ENCODE measurements at regions of chr19 and their contacts with region 1.

Region 1: DNA sequence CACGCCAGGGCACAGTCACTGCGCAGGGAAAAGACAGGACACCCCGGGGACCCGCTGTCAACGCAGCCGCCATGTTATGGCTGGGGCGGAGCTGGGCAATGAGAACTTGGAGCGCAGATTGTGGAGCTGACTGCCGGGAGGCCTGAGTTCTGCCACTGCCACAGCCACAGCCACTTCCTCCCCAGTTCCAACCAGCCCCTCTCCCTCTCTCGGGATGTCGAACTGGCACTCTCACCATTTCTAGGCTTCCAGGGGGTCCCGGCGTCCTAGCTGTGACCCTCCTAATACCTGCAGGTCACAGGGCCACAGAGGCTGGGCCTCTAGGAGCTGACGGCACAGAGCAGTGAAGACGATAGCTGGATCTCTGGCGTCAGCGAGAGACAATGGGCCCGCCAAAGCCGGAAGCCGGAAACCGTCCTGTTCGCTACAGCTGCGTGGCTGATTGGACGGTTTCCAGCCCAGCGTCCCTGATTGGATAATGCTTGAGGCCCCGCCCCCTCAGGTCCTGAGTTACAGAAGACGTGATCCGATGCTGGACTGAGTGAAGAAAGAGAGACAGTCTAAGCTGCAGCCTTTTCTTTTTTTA is at the start of gene ZNF506:
- DNase-seq: peak; percentile 91
- ATAC-seq: peak; percentile 95
- H3K4me3 Mint-ChIP-seq: peak within 1 kb of the TSS; percentile 98
- H3K27ac Mint-ChIP-seq: peak within 1 kb of the TSS; percentile 99
- H3K4me1 Mint-ChIP-seq: peaks cover 15% of the 10 kb centered on the region
- H3K27me3 Mint-ChIP-seq: no peaks in the 10 kb centered on the region
- total RNA-seq, gene ZNF506: 39.4 to 41.5 TPM

Region 2: DNA sequence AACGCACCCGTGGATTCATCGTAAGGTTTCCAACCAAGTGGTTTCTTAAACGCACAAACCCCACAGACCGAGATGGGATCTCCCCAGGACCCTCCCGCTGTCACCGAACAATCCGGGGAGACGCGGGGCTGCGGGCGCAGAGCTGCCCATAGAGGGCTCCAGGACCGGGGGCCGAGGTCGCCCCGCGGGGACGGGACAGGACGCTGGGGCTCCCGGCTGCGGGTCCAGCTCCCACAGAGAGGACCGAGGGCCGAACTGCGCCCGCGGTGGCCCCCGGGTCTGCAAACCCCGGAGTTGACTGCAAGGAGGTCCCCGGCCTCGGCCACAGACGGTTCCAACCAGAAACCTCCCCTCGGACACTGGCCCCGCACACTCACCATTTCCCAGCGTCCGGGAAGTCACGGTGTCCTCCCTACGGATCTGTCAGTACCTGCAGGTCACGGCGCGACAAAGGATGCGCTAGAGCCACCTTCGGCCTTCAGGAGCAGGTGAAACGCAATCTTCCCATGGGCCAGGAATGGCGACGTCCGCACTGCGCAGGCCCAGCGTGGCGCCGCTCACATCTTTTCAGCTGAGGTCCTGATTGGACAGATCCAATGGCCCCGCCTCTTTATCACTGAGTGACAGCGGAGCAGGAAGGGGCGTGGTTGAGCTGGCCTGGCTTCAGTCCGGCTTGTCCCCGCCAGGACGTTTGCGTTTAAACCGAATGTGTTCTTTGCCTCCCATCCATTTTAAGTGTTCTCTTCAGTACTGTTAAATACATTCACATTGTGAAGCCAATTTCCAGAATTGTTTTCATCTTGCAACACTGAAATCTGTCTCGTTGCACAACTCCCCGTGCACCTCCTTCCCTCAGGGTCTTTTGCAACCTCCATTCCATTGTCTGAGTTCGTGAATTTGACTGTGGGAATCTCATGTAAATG is 88.6 kb before region 1 on chr19 and contains the start of gene ZNF14:
- POLR2A ChIA-PET with region 1: interaction called, 18 read pairs
- DNase-seq: peak; percentile 85
- ATAC-seq: peak; percentile 100
- H3K4me3 Mint-ChIP-seq: peak within 1 kb of the TSS; percentile 99
- H3K27ac Mint-ChIP-seq: peak within 1 kb of the TSS; percentile 97
- H3K4me1 Mint-ChIP-seq: peaks cover 16% of the 10 kb centered on the region
- H3K27me3 Mint-ChIP-seq: no peaks in the 10 kb centered on the region
- total RNA-seq, gene ZNF14: 13.7 to 16.9 TPM

Region 3: GRCh38 chr19:19860756-19861390 is 39.4 kb after region 1 on chr19:
- POLR2A ChIA-PET with region 1: interaction called, 87 read pairs
- DNase-seq: peak; percentile 48
- ATAC-seq: peak; percentile 44
- H3K4me3 Mint-ChIP-seq: peak overlapping the region; percentile 77
- H3K27ac Mint-ChIP-seq: peak overlapping the region; percentile 72
- H3K4me1 Mint-ChIP-seq: peaks cover 8% of the 10 kb centered on the region
- H3K27me3 Mint-ChIP-seq: no peaks in the 10 kb centered on the region

Region 4: DNA sequence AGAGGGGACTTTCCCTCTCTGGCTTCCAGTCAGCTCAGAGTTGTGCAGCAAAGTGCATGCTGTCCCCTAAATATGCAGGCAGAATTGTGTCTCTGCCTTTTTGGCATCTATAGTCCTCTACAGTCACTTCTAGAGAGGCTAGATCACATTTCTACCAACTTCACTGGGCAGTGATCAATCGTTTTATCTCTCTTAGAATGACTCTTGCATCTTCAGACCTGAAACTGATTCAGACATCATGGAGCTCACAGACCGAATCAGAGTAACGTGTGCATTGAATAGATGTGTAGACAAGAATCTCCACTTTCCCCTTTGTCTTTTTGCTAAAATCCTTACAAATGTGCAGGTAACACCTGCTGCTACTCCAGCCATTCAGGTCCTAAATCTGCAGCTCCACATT is 50.5 kb after region 1 on chr19:
- POLR2A ChIA-PET with region 1: interaction called, 87 read pairs
- DNase-seq: no peak
- ATAC-seq: no peak
- H3K4me3 Mint-ChIP-seq: no peak overlapping the region
- H3K27ac Mint-ChIP-seq: no peak overlapping the region
- H3K4me1 Mint-ChIP-seq: peaks cover 16% of the 10 kb centered on the region
- H3K27me3 Mint-ChIP-seq: no peaks in the 10 kb centered on the region

Region 5: DNA sequence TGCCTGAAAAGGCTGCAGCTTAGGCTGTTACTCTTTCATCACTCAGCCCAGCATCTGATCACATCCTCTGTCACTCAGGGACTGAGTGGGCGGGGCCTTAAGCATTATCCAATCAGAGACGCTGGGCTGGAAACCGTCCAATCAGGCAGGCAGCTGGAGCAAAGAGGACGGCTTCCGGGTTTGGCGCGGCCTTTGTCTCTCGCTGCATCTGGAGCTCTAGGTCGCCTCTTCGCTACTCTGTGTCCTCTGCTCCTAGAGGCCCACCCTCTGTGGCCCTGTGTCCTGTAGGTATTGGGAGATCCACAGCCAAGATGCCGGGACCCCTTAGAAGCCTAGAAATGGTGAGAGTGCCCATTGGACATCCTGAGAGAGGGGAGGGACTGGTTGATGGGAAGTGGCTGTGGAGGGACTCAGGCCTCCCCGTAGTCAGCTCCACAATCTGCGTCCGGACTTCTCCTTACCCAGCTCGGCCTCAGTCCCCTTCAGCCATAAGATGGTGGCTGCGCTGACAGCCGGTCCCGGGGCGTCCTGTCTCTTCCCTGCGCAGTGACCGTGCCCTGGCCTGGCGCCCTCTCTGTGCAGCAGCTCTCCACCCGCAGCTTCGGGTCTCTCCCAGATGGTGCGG is 345.7 kb after region 1 on chr19 and contains the start of gene ZNF486:
- POLR2A ChIA-PET with region 1: interaction called, 11 read pairs
- DNase-seq: peak; percentile 89
- ATAC-seq: peak; percentile 94
- H3K4me3 Mint-ChIP-seq: peak within 1 kb of the TSS; percentile 99
- H3K27ac Mint-ChIP-seq: peak within 1 kb of the TSS; percentile 97
- H3K4me1 Mint-ChIP-seq: peaks cover 21% of the 10 kb centered on the region
- H3K27me3 Mint-ChIP-seq: no peaks in the 10 kb centered on the region
- total RNA-seq, gene ZNF486: 15.5 to 16.1 TPM

Measured in activated naive CD8-positive, alpha-beta T cell treated with anti-CD3 and anti-CD28 coated beads, Interleukin-2, amount 10 ng/mL, durations not matched to agents 7 days and 5 days (primary cell).